PC-9 (cell line): ENCODE measurements at regions of chr4 and their contacts with region 1.

Region 1: GRCh38 chr4:185134307-185134869 is 8.7 kb upstream of the SLC25A4 start:
- DNase-seq: no peak
- H3K4me3 ChIP-seq: no peak overlapping the region
- H3K27ac ChIP-seq: no peak overlapping the region
- H3K4me1 ChIP-seq: no peaks in the 10 kb centered on the region
- H3K27me3 ChIP-seq: no peaks in the 10 kb centered on the region
- CTCF ChIP-seq: peak; percentile 87

Region 2: DNA sequence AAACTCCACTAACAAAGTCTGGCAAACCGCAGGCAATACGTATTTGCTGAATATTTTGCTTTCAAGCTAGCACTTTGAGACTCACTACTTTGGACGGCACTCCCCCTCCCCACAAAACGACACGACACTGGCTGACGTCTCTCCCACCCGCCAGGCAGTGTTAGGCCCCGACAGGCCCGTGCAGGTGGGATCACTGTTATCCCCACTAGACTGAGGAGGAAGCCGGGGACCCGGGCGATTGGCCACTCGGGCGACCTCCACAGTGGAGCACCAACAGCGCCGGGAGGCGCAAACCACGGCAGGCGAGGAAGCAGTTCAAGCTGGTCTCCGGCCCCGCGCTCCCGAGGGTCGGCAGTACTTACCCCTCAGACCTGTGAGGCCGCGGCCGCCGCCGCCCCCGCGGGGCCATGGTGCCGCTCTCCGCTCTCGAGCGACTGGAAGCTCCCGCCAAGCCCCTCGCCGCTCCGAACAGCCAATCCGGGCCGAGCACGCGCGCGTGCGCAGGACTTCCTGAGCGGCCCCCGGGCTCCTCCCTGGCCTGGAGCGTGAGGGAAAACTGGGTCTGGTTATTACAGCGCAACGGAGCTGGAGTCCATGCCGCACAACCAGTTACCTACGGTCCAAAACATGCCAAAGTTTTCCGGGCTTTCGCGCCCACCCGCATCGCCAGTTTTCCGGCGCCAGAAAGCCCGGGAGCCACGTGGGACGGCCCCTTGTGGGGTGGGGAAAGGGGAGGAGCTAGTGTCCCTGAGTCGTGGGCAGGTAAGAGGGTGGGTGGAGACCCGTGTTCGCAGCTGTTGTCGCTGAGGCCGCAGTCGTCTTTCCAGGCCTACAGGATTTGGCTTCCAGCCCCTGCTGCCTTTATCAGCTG is 400.5 kb before region 1 on chr4 and contains the start of gene CENPU:
- CTCF ChIA-PET with region 1: interaction called, 7 read pairs
- POLR2A ChIA-PET with region 1: no interaction called
- intact Hi-C with region 1: loop called (anchors 5 kb)
- DNase-seq: peak; percentile 90 to 98
- H3K4me3 ChIP-seq: peak within 1 kb of the TSS; percentile 95
- H3K27ac ChIP-seq: peak within 1 kb of the TSS; percentile 73
- H3K4me1 ChIP-seq: peaks cover 19% of the 10 kb centered on the region
- H3K27me3 ChIP-seq: no peaks in the 10 kb centered on the region
- CTCF ChIP-seq: no peak
- total RNA-seq, gene CENPU: 25.5 and 47.7 TPM in 2 replicates

Region 3: DNA sequence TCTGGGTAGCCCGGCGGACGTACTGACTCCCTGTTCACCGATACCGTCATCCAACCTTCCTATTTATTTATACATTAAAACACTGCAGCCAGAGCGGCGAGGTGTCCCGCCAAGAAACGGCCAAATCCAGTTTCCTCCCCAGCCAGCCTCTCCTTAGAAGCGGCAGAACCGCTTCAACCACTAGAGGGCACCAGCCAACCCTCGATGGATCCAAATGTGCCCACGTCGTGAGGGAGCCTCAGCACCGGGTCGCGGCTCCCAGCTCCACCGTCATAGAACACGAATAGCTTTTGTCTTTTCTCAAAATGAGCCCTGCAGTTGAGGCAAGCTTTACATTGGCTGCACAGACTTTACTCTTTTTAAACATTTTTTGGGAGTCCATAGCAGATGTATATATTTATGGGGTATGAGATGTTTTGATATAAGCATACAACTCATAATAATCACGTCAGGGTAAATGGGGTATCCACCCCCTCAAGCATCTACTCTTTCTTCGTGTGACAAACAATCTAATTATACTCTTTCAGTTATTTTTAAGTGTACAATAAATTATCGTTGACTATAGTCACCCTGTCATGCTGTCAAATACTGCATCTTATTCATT is 129.1 kb before region 1 on chr4:
- CTCF ChIA-PET with region 1: interaction called, 5 read pairs
- POLR2A ChIA-PET with region 1: no interaction called
- intact Hi-C with region 1: loop called (anchors 1 kb)
- DNase-seq: peak in 1 of 2 experiments; percentile 73
- H3K4me3 ChIP-seq: no peak overlapping the region
- H3K27ac ChIP-seq: no peak overlapping the region
- H3K4me1 ChIP-seq: no peaks in the 10 kb centered on the region
- H3K27me3 ChIP-seq: no peaks in the 10 kb centered on the region
- CTCF ChIP-seq: peak; percentile 83

Region 4: GRCh38 chr4:185039508-185040273 is 94.7 kb before region 1 on chr4:
- CTCF ChIA-PET with region 1: interaction called, 5 read pairs
- POLR2A ChIA-PET with region 1: no interaction called
- intact Hi-C with region 1: loop called (anchors 2 kb)
- DNase-seq: peak; percentile 37
- H3K4me3 ChIP-seq: no peak overlapping the region; the same call in 1 of the 2 replicates
- H3K27ac ChIP-seq: peak overlapping the region; percentile 46; the same call in 1 of the 2 replicates
- H3K4me1 ChIP-seq: no peaks in the 10 kb centered on the region
- H3K27me3 ChIP-seq: no peaks in the 10 kb centered on the region
- CTCF ChIP-seq: peak; percentile 79

Region 5: GRCh38 chr4:185203486-185204237 is 69.3 kb after region 1 on chr4 and contains the start of gene CFAP97:
- CTCF ChIA-PET with region 1: no interaction called
- POLR2A ChIA-PET with region 1: no interaction called
- intact Hi-C with region 1: no loop called
- DNase-seq: peak; percentile 49 to 78
- H3K4me3 ChIP-seq: peak within 1 kb of the TSS; percentile 75
- H3K27ac ChIP-seq: peak within 1 kb of the TSS; percentile 76
- H3K4me1 ChIP-seq: peaks cover 35% of the 10 kb centered on the region
- H3K27me3 ChIP-seq: no peaks in the 10 kb centered on the region
- CTCF ChIP-seq: no peak
- total RNA-seq, gene CFAP97: 33.4 and 48.2 TPM in 2 replicates

Region 6: DNA sequence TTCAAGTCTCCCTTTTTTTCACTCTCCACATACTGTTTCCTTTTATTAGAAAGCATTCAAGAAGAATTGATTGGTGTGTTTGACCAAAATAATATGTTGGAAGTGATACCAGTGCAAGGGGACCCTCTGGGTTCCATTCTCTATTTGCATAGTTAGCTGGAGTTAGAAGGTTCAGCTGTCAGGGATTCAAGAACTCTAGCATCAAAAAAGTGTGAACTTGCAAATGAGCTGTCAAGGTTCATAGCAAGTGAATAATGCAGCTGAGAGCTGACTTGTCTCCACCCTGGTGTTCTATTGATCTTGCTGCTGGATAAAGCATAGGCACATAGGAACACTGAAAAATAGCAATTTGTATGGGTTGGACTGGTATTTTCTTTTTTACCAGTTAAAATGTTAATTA is 604.4 kb after region 1 on chr4:
- CTCF ChIA-PET with region 1: no interaction called
- POLR2A ChIA-PET with region 1: interaction called, 27 read pairs
- intact Hi-C with region 1: no loop called
- DNase-seq: no peak
- H3K4me3 ChIP-seq: no peak overlapping the region
- H3K27ac ChIP-seq: no peak overlapping the region
- H3K4me1 ChIP-seq: peaks cover 16% of the 10 kb centered on the region
- H3K27me3 ChIP-seq: no peaks in the 10 kb centered on the region
- CTCF ChIP-seq: no peak